Endothelial cell of umbilical vein (primary cell): ENCODE measurements at regions of chr18 and their contacts with region 1.

Region 1: DNA sequence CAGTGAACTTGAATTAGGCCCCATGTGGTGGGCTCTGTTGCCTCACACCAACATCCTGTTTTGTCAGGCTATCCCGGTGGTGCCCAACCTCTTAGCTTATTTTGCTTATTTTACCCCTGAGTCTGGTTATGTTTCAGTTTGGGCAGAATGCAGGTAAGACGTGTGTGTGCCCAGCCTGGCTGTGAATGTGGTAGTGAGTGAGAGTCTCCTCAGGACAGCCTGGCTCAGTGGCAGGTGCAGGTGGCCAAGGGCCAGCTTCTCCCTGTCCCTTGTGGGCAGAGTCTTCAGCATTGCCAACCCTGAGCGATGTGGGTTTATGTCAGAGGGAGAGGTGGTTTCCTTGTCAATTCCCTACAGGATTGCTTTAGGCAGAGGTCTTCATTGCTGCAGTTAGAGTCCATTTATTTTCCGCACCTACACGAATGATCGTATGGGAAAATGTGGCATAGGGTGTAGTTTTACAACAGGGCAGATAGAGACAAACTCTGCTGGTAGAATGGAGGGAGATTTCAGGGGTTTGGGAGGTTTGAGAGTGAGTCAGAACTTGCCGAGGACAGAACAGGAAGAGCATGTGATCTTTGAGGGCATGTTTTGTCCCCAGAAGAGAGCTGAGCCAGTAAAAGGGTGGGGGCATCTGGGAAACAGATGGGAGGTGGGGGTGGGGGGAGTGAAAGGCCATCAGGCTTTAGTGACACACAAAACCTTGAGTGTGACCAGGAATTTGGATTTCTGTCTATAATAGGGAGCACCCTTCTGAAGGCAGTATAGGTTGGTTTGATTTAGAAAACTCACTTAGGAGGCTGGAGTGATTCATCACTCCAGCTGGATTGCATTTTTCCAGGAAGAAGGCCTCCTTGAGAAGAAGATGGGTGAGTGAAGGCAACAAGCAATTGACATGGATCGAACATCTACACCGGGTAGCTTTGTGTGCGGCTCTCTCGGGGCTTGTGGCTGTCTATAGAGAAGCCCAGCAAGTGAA is 156.2 kb upstream of the CELF4 start:
- DNase-seq: no peak
- H3K4me3 ChIP-seq: no peak overlapping the region
- H3K27ac ChIP-seq: no peak overlapping the region
- H3K4me1 ChIP-seq: no peaks in the 10 kb centered on the region
- H3K27me3 ChIP-seq: no peaks in the 10 kb centered on the region
- CTCF ChIP-seq: no peak
- POLR2A ChIP-seq: no peak

Region 2: DNA sequence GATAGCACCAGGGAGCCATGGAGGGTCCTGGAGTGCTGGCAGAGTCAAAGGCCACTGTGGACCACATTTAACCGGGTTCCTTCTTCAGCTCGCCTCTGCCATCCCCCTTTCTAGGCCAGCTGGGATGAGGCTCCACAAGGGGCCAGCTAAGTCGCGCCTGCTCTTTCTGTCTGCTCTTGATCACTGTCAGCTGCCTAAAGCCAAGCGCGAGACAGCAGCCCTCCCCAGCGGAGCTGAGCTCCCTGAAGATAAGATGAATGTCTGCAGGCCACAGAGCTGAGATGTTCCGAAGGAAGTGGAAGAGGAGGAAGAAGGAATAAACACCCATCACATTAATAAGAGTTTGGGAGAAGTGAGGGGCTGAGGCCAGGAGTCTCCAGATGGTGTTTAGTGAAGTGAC is 255.9 kb before region 1 on chr18:
- CTCF ChIA-PET with region 1: no interaction called
- POLR2A ChIA-PET with region 1: no interaction called
- dilution Hi-C with region 1: no loop called
- intact Hi-C with region 1: no loop called
- DNase-seq: no peak
- H3K4me3 ChIP-seq: no peak overlapping the region
- H3K27ac ChIP-seq: no peak overlapping the region
- H3K4me1 ChIP-seq: no peaks in the 10 kb centered on the region
- H3K27me3 ChIP-seq: no peaks in the 10 kb centered on the region
- CTCF ChIP-seq: no peak
- POLR2A ChIP-seq: no peak

Region 3: DNA sequence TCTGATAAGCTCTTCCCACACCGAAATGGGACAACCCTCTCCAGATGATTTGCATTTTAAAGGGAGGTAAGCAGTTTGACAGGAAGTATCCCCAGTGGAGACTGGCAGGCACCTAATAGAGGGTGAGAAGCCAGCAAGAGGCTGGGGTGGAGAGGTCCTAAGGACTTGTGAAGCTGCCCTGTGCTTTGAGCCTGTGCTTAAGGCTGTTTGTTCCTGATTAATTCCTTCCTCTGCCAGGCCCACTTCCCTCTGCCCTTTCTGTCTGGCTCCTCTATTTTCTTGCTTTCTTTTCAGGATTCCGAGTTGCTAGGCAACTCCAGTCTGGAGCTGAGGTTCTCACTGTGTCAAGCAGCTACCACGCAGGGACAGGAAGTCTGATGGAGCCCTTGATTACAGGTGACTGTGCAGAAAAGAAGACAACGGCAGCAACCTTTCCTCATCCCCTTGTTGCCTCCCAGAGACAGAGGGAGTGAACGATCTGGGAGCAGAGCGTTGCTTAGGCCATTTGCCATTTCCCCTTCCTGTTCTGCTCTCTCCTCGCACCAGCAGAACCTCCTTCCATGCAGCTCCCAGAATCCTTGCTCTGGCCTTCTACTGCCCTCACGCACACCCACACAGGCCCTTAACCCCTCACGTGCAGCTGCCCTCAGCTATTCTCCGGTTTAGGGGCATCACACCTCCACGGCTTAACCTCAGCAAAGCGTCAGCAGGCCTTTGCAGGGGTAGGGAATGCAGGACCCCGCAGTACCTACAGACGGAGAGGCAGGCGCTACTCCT is 52.7 kb before region 1 on chr18:
- CTCF ChIA-PET with region 1: no interaction called
- POLR2A ChIA-PET with region 1: no interaction called
- dilution Hi-C with region 1: no loop called
- intact Hi-C with region 1: loop called (anchors 10 kb)
- DNase-seq: no peak
- H3K4me3 ChIP-seq: no peak overlapping the region
- H3K27ac ChIP-seq: no peak overlapping the region
- H3K4me1 ChIP-seq: no peaks in the 10 kb centered on the region
- H3K27me3 ChIP-seq: no peaks in the 10 kb centered on the region
- CTCF ChIP-seq: no peak
- POLR2A ChIP-seq: no peak